ENCODE measurements at regions of chr2 and their contacts with region 1.

Region 1: DNA sequence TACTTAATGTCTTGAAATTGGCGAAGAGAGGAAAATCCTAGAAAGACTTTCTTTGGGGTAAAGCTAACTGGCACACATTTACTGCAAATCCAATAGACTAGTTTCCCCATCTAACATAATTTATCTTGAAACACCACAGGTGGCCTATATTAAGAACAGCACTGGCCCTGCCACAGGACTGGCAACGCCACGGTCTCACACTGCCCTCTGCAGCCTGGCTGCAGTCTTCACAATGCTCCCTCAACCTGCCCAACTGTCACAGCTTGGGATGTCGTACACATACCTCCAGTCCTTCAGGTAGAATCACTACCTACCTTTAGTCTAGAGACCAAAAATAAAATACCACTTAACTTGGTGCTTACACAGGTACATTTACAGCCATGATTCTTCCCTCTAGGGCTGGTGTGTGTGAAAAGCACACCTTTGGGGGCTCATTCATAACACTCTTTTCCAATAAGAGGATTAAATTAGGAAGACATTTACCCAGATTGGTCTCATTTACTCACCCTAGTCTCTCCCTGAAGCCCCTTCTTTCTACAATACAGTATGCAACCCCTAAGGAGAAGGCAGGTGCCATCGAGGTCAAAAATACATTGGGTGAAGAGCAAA is 222.2 kb downstream of the C1D start:
- DNase-seq: peak; percentile 53 to 83
- ATAC-seq: peak; percentile 89 to 99 (median 96)
- H3K4me3 ChIP-seq: no peak overlapping the region
- H3K27ac ChIP-seq: no peak overlapping the region
- H3K4me1 ChIP-seq: no peaks in the 10 kb centered on the region
- H3K27me3 ChIP-seq: no peaks in the 10 kb centered on the region
- CTCF ChIP-seq: peak; percentile 91

Region 2: DNA sequence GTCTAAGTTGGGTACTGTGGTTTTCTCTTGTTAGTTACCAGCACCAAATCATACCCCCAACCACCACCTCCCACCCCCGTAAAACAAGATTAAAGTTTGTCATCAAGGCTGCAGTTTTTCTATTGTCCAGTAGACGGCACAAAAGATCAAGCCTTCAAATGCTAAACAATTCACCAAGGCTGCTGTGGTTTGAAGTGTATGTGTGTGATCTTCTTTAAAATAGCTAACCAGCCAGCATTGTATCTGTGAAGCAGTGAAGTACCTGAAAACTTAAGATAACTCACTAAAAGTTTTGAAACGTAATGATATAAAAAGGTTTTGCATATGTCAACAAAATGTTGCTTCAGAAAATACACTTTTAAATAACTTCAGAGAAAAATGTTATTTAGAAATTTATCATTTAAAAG is 1411.5 kb before region 1 on chr2:
- intact Hi-C with region 1: loop called (anchors 5 kb)
- DNase-seq: no peak
- ATAC-seq: peak in 1 of 4 donors; percentile 18
- H3K4me3 ChIP-seq: no peak overlapping the region
- H3K27ac ChIP-seq: no peak overlapping the region
- H3K4me1 ChIP-seq: peaks cover 9% of the 10 kb centered on the region
- H3K27me3 ChIP-seq: peaks cover 0 to 32% (median 16%) of the 10 kb centered on the region in 3 donors
- CTCF ChIP-seq: peak; percentile 77

Region 3: DNA sequence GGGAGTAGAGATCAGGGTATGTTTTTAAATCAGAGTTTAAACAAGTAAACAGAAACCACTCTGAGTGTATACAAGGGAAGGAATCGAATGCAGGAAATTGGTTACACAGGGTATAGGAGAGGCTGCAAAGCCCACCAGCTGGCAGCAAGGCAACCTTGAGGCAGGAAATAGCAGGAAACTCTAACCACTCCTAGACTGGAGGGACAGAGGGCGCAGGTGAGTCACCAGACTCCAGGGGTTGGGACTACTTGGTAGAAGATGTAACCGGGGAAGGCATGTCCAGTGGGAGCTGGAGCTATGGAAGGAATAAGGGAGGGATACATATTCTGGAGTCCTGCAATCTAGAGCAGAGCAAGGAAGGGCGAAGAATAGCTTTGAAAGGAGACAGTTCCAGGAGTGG is 1253.3 kb before region 1 on chr2:
- intact Hi-C with region 1: loop called in 1 of 2 experiments (anchors 10 kb)
- DNase-seq: peak in 1 of 2 donors; percentile 15
- ATAC-seq: no peak
- H3K4me3 ChIP-seq: no peak overlapping the region
- H3K27ac ChIP-seq: no peak overlapping the region
- H3K4me1 ChIP-seq: no peaks in the 10 kb centered on the region
- H3K27me3 ChIP-seq: peaks cover 5 to 39% (median 9%) of the 10 kb centered on the region in 3 donors
- CTCF ChIP-seq: no peak

Region 4: DNA sequence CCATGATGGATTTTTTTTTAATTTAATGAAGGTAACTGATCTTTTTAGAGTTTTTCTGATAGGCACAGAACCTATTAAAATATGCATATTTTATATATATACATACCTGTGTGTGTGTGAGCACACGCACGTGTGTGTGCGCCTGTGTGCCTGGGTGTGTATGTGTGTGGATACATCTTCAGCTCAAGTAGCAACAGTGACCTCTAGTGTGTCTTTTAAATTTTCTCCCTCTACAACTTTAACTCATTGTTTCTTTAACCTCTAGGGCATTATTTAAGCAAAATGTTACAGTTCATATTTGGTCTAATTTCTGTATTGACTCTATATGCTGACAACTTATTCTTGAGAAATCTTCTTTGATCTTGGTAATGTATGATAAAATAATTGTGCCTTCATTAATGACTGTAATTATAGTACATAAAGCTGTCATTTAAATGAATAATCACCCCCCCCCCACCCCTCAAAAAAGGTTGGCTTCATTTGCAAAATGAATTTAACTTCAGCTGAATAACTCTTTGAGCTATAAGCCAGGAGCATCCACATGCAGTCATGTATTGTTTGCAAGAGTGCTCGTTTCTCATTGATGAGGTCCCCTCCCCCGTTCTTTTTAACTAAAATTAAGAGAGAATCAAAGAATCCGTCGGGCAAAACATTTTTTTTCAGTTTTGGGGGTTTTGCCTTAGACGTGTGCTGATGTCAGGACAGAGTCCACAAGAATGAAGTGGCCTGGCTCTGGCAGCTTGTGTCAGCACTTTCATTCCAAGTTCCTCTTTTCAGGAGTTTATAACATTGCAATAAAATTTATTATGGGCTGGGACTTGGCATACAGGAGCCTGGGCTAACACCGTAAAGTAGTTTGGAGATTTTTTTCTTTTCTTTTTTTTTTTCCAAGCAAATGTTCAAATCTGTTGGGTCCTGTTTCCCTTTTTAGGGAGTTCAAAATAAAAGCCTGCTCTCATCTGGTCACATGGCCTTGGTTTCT is 363.5 kb before region 1 on chr2:
- intact Hi-C with region 1: loop called in 1 of 2 experiments (anchors 10 kb)
- DNase-seq: no peak
- ATAC-seq: peak in 3 of 4 donors; percentile 42 to 71 (median 63)
- H3K4me3 ChIP-seq: no peak overlapping the region
- H3K27ac ChIP-seq: no peak overlapping the region
- H3K4me1 ChIP-seq: no peaks in the 10 kb centered on the region
- H3K27me3 ChIP-seq: peaks cover 0 to 2% (median 0%) of the 10 kb centered on the region in 3 donors
- CTCF ChIP-seq: peak; percentile 50

Region 5: GRCh38 chr2:67671464-67672450 is 168.8 kb before region 1 on chr2:
- intact Hi-C with region 1: loop called in 1 of 2 experiments (anchors 10 kb)
- DNase-seq: no peak
- ATAC-seq: no peak
- H3K4me3 ChIP-seq: no peak overlapping the region
- H3K27ac ChIP-seq: peak overlapping the region; percentile 80
- H3K4me1 ChIP-seq: peaks cover 44% of the 10 kb centered on the region
- H3K27me3 ChIP-seq: no peaks in the 10 kb centered on the region
- CTCF ChIP-seq: no peak

Measured in psoas muscle (tissue), 8 donors.